MCF 10A (cell line): ENCODE measurements at regions of chr1 and their contacts with region 1.

Region 1: DNA sequence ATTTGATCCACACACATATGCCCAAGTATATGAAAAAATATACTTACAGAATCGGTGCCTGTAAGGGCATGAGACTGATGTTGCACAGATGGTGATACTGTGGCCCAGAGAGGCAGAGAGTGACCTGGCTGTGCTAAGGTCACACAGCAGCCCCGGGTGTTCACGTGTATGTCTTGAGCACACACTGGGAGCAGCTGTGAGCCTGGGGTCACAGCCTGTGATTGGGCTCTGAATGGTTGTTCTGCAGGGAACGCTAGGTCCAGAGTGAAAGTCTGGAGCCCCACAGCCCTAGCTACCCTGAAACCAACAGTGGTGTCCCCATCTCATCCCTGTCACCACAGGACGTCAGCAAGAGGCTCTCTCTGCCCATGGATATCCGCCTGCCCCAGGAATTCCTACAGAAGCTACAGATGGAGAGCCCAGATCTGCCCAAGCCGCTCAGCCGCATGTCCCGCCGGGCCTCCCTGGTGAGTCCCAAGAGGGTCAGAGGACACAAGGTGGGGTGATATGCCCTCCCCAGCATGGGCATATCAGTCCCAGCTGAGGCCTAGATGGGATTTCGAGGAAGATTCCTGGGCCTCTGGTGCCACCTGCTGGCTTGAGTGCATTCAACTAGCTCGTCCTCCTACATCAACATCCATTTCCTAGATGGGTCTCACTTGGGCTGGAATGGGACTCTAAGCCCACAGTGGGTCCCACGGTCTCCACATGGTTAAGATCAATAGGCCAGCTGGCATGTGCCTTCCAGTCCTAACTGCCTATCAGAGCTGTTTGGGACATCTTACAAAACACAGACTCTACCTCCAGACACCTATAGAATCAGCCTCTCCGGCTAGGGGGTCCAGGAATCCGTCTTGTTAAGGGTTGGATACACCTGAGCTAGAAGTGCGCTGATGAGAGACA is 19.7 kb downstream of the CDK18 start:
- DNase-seq: peak; percentile 95
- H3K4me3 Mint-ChIP-seq: no peak overlapping the region
- H3K27ac Mint-ChIP-seq: no peak overlapping the region
- H3K4me1 Mint-ChIP-seq: no peaks in the 10 kb centered on the region
- H3K27me3 Mint-ChIP-seq: no peaks in the 10 kb centered on the region
- CTCF ChIP-seq: peak; percentile 99

Region 2: GRCh38 chr1:205273551-205273982 is 250.6 kb before region 1 on chr1:
- CTCF ChIA-PET with region 1: interaction called, 44 read pairs
- POLR2A ChIA-PET with region 1: interaction called, 5 read pairs
- intact Hi-C with region 1: loop called (anchors 1 kb)
- DNase-seq: peak; percentile 93
- H3K4me3 Mint-ChIP-seq: no peak overlapping the region
- H3K27ac Mint-ChIP-seq: no peak overlapping the region
- H3K4me1 Mint-ChIP-seq: peaks cover 27% of the 10 kb centered on the region
- H3K27me3 Mint-ChIP-seq: peaks cover 9% of the 10 kb centered on the region
- CTCF ChIP-seq: peak; percentile 100

Region 3: GRCh38 chr1:205354259-205354904 is 169.8 kb before region 1 on chr1:
- CTCF ChIA-PET with region 1: interaction called, 130 read pairs
- POLR2A ChIA-PET with region 1: interaction called, 4 read pairs
- intact Hi-C with region 1: loop called (anchors 1 kb)
- DNase-seq: peak; percentile 92
- H3K4me3 Mint-ChIP-seq: no peak overlapping the region
- H3K27ac Mint-ChIP-seq: no peak overlapping the region
- H3K4me1 Mint-ChIP-seq: peaks cover 13% of the 10 kb centered on the region
- H3K27me3 Mint-ChIP-seq: peaks cover 23% of the 10 kb centered on the region
- CTCF ChIP-seq: peak; percentile 91

Region 4: DNA sequence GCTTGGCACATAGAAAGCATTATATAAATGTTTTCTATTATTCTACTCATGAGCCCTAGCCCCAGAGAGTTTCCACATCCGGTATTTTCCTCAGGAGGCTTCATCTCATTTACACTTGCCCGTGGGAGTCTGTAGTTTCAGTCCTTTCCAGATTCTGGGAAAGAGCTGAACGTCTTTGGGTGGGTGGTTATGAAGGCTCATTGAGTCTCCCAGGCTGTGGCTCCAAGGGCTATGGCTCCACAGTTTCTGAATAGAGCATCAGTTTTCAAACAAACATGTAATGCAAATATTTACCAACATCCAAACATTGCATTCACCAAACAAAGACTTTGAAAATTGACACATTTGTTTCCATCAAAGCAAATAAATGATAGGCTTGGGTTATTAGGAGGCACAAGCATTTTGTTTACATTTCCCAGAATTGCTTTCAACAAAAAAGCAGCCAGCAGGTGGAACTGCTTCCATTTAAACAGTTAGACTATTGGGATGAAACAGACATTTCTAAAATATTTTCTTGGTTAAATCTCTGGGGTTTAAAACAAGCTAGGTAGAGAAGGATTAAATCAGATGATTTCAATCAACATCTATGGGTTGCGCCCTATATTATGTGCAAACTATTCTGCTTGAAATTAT is 101.0 kb before region 1 on chr1:
- CTCF ChIA-PET with region 1: interaction called, 41 read pairs
- POLR2A ChIA-PET with region 1: no interaction called
- intact Hi-C with region 1: no loop called
- DNase-seq: no peak
- H3K4me3 Mint-ChIP-seq: no peak overlapping the region
- H3K27ac Mint-ChIP-seq: no peak overlapping the region
- H3K4me1 Mint-ChIP-seq: no peaks in the 10 kb centered on the region
- H3K27me3 Mint-ChIP-seq: peaks cover 67% of the 10 kb centered on the region
- CTCF ChIP-seq: peak; percentile 49

Region 5: DNA sequence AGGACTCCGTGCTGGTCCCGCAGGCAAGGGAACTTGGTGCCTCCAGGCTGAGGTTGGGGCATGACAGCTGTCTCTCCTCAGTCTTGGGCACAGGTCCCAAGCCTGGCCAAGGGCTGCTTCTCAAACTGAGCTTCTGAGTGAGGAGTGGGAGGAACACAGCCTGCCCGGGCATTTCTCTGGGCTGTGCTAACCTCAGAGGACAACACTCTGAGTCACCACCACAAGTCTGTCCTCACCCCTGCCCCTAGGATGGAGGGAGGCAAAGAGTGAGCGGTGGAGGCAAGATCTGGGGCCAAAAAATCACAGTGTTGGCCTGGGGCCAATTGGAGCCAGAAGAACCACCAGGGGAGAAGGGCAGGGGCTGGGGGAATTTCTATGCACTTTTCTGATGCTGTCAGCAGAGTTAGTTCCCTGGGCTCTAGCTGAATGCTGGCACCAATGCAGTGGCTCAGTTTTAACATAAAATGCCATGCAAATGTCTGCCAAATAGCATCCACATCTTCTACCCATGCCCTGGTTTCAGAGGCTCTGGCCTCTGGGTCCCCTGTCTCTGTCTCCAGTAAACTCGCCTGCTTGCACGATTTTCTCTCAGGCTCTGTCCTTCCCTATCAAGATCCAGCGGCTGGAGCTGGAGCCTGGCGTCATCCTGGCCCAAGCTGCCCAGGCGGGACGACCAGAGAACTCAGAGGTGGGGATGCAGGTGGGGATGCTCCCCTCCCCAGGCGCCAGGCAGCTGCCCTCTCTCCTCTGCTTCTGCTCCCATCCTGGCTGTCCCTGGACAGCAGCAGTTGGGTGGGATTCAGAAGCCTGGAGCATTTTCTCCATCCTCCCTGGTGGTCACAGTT is 30.7 kb before region 1 on chr1:
- CTCF ChIA-PET with region 1: interaction called, 1,608 read pairs
- POLR2A ChIA-PET with region 1: interaction called, 70 read pairs
- intact Hi-C with region 1: loop called (anchors 1 kb)
- DNase-seq: peak; percentile 99
- H3K4me3 Mint-ChIP-seq: peak overlapping the region; percentile 53
- H3K27ac Mint-ChIP-seq: peak overlapping the region; percentile 86
- H3K4me1 Mint-ChIP-seq: peaks cover 38% of the 10 kb centered on the region
- H3K27me3 Mint-ChIP-seq: no peaks in the 10 kb centered on the region
- CTCF ChIP-seq: no peak

Region 6: DNA sequence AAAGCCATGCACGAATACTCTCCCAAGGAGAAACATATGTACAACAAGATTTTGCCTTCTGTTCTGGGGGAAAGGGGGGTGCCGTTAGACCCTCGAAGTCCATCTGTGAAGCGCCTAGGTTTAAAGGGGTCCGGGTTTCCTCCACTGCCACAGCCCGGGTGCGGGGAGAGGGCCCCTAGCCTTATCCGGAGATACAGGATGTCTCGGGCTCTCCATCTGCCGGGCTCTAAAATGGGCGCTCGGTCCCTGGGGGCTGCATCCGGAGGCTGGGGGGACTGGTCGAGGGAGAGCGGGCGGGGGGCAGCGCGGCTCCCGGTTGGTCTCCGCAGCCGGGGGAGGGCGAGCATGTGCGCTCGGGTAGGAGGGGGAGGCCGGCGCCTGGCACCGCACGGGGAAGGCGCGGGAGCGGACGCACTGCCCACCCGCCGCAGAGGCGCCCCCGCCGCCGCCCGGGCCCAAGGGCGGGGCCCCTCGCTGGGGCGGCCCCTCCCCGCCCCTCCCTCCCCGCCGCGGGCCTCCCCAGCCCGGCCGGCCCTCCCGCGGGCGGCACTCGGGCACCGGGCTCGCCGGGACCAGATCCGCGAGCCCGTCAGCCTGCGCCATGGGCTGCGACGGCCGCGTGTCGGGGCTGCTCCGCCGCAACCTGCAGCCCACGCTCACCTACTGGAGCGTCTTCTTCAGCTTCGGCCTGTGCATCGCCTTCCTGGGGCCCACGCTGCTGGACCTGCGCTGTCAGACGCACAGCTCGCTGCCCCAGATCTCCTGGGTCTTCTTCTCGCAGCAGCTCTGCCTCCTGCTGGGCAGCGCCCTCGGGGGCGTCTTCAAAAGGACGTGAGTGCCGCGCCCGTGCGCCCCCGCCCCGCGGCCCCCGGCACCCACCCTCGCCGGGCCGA is 44.6 kb after region 1 on chr1:
- CTCF ChIA-PET with region 1: interaction called, 15 read pairs
- POLR2A ChIA-PET with region 1: no interaction called
- intact Hi-C with region 1: no loop called
- DNase-seq: no peak
- H3K4me3 Mint-ChIP-seq: peak overlapping the region; percentile 26
- H3K27ac Mint-ChIP-seq: no peak overlapping the region
- H3K4me1 Mint-ChIP-seq: no peaks in the 10 kb centered on the region
- H3K27me3 Mint-ChIP-seq: peaks cover 83% of the 10 kb centered on the region
- CTCF ChIP-seq: no peak

Region 7: DNA sequence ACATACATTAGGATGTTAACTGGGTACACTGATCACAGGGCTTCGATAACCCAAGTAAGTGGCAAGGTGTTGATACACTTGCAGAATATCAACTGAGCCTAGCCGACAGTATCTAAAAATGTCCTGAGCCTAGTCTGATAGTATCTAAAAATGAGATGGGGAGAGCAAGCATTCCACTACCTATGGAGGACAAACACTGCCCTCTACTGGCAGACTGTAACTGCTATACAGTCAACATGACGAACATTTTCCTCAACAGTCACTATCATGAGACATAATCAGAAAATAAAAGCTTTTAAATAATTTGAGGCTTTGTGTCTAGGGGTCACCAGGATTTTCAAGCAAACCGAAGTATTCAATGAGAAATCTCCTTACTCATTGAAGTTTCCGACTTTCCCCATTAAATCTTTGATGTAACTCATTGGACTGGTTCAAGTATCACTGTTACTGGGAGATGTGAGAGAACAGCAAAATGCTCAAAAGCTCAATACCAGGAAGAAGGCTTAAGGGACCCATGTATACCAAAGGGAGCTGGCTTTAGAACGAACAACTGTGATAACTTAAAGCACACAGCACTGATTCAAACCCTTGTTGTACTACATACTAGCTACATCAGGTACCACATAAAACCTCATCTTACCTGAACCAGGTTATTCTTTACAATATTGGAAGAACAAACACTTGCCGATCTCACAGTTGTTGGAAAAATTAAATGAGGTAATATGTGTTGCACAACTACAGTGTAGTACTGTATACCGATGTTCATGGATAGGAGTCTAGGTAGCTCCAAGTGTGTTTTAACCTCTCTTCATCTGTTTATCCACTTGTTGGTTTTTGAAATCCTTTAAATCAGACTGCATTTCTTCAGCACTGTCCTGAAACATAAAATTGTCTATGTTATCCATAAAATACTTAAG is 187.2 kb after region 1 on chr1:
- CTCF ChIA-PET with region 1: interaction called, 26 read pairs
- POLR2A ChIA-PET with region 1: no interaction called
- intact Hi-C with region 1: loop called (anchors 2 kb)
- DNase-seq: peak; percentile 93
- H3K4me3 Mint-ChIP-seq: no peak overlapping the region
- H3K27ac Mint-ChIP-seq: no peak overlapping the region
- H3K4me1 Mint-ChIP-seq: peaks cover 30% of the 10 kb centered on the region
- H3K27me3 Mint-ChIP-seq: no peaks in the 10 kb centered on the region
- CTCF ChIP-seq: peak; percentile 97